Common myeloid progenitor, CD34-positive (primary cell): ENCODE measurements at regions of chr5 and their contacts with region 1.

Region 1: GRCh38 chr5:111550279-111551020 is 38.1 kb upstream of the STARD4 start:
- DNase-seq: peak; percentile 82 to 87 (median 83)
- H3K4me3 ChIP-seq: peak overlapping the region in 2 of 7 experiments; percentile 3 to 6
- H3K27ac ChIP-seq: no peak overlapping the region
- H3K4me1 ChIP-seq: peaks cover 9 to 17% (median 12%) of the 10 kb centered on the region in 4 experiments
- H3K27me3 ChIP-seq: no peaks in the 10 kb centered on the region

Region 2: GRCh38 chr5:112146323-112147226 is 596.1 kb after region 1 on chr5:
- CTCF ChIA-PET with region 1: interaction called, 27 read pairs
- POLR2A ChIA-PET with region 1: no interaction called
- DNase-seq: peak; percentile 71 to 88 (median 79)
- H3K4me3 ChIP-seq: no peak overlapping the region
- H3K27ac ChIP-seq: no peak overlapping the region
- H3K4me1 ChIP-seq: no peaks in the 10 kb centered on the region
- H3K27me3 ChIP-seq: no peaks in the 10 kb centered on the region